ENCODE measurements at regions of chr7 and their contacts with region 1.

Region 1: DNA sequence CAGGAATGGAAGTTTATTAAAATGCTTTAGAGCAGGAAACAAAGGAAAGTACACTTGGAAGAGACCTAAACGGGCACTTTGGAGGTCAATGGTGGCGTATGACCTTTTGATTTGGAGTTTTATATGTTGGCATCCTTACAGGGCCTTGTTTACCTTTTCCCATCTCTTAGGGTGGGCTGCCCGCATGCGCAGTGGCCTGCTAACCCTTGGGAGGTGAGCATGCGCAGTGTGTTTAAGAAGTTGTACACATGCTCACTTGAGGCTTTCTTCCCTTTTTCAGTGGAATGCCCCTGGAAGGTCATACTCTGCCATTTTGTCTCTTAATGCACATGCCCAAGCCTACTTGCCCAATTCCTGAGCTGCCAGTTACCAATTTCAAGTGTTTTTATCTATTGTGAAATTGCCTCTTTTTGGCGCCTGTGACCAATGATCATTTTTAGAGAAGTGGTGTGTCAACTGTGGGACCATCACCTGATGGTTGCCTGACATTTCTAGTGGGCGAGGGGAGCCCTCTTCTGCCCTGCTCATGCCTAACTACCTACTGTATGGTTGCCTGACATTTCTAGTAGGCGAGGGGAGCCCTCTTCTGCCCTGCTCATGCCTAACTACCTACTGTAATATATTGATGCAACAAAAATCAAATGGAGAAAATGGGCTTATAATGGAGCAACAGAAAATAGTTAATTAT is 138.0 kb downstream of the PPP1R9A start:
- DNase-seq: peak; percentile 66
- ATAC-seq: peak; percentile 99
- H3K4me3 ChIP-seq: no peak overlapping the region
- H3K27ac ChIP-seq: no peak overlapping the region
- H3K4me1 ChIP-seq: no peaks in the 10 kb centered on the region
- H3K27me3 ChIP-seq: no peaks in the 10 kb centered on the region
- CTCF ChIP-seq: peak; percentile 74

Region 2: DNA sequence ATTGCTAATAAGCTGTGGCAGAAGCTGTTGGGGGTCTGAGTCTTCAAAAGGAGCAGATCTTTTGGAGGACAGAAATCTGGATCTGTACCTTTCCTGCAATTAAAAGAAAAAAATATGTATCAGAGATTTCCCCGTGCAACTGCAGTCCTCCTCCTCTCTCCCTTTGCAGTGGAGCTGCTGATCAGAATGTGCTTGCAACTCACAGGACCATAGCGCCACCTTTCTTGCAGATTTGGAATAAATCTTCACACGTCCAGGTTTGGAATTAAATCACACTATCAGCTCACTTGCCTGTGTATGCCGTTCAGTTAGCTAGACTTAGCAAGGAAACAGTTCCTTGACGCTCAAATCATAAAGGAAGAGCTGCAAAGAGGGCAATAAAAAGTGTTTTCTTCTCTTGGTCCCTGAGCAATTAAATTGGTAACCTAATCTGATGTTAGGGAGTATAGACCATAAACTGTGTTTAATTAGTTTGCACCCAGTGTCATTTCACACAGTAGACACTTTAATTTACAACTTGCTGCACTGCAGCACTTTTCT is 201.5 kb after region 1 on chr7:
- CTCF ChIA-PET with region 1: no interaction called
- POLR2A ChIA-PET with region 1: no interaction called
- intact Hi-C with region 1: loop called (anchors 5 kb)
- DNase-seq: peak; percentile 73
- ATAC-seq: peak; percentile 86
- H3K4me3 ChIP-seq: no peak overlapping the region
- H3K27ac ChIP-seq: no peak overlapping the region
- H3K4me1 ChIP-seq: peaks cover 4% of the 10 kb centered on the region; the same call in 1 of the 2 replicates
- H3K27me3 ChIP-seq: no peaks in the 10 kb centered on the region
- CTCF ChIP-seq: peak; percentile 85

Measured in PC-3 (cell line).